Esophagus muscularis mucosa (tissue), 4 donors: ENCODE measurements at regions of chr15 and their contacts with region 1.

Region 1: GRCh38 chr15:50145451-50145872 is 26.4 kb upstream of the ATP8B4 start:
- DNase-seq: no peak
- H3K4me3 ChIP-seq: no peak overlapping the region
- H3K27ac ChIP-seq: no peak overlapping the region
- H3K4me1 ChIP-seq: peaks cover 0 to 8% (median 6%) of the 10 kb centered on the region in 4 donors
- H3K27me3 ChIP-seq: no peaks in the 10 kb centered on the region
- CTCF ChIP-seq: peak; percentile 56 to 62 (median 58)
- EP300 ChIP-seq: no peak
- POLR2A ChIP-seq: no peak

Region 2: DNA sequence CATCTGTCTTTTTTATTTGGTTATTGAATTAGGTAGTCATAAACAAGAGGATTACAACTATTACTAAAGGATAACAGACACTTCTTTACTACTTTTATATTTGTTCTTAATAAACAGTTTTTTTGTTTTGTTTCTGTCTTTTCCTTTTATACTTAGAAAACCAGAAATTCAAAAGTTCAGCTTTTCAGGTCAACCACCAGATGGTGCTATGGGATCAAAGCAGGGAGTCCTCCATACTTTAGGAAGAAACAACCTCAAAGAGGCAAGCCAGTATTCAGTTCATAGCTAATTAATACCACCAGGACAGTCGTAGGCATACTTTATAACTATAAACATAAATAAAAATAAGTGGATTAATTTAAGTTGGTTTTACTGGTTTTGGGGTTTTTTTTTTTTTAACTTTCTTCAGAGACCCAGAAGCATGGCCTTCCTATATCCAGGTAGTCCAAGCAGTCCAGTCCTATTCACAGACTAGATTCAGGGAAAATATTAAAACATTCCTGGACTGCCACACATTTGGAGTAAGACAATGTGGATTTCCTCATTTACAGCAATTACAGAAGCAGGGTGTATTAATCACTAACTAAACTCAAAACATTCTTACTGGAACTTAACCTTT is 1283.5 kb before region 1 on chr15:
- intact Hi-C with region 1: loop called (anchors 5 kb)
- DNase-seq: no peak
- H3K4me3 ChIP-seq: no peak overlapping the region
- H3K27ac ChIP-seq: no peak overlapping the region
- H3K4me1 ChIP-seq: peaks cover 0 to 20% (median 15%) of the 10 kb centered on the region in 4 donors
- H3K27me3 ChIP-seq: no peaks in the 10 kb centered on the region
- CTCF ChIP-seq: peak; percentile 86 to 89 (median 88)
- EP300 ChIP-seq: no peak
- POLR2A ChIP-seq: no peak

Region 3: GRCh38 chr15:49235446-49236124 is 909.9 kb before region 1 on chr15:
- intact Hi-C with region 1: loop called (anchors 5 kb)
- DNase-seq: no peak
- H3K4me3 ChIP-seq: no peak overlapping the region
- H3K27ac ChIP-seq: peak overlapping the region; percentile 45 to 69 (median 47)
- H3K4me1 ChIP-seq: peaks cover 17 to 57% (median 53%) of the 10 kb centered on the region in 4 donors
- H3K27me3 ChIP-seq: no peaks in the 10 kb centered on the region
- CTCF ChIP-seq: peak; percentile 75 to 91 (median 79)
- EP300 ChIP-seq: no peak
- POLR2A ChIP-seq: no peak

Region 4: GRCh38 chr15:49855917-49856637 is 289.4 kb before region 1 on chr15:
- intact Hi-C with region 1: no loop called
- DNase-seq: no peak
- H3K4me3 ChIP-seq: no peak overlapping the region
- H3K27ac ChIP-seq: peak overlapping the region; percentile 8 to 46 (median 44)
- H3K4me1 ChIP-seq: peaks cover 0 to 11% (median 0%) of the 10 kb centered on the region in 4 donors
- H3K27me3 ChIP-seq: no peaks in the 10 kb centered on the region
- CTCF ChIP-seq: no peak
- EP300 ChIP-seq: no peak
- POLR2A ChIP-seq: no peak

Region 5: GRCh38 chr15:50083424-50084025 is 61.9 kb before region 1 on chr15:
- intact Hi-C with region 1: no loop called
- DNase-seq: no peak
- H3K4me3 ChIP-seq: no peak overlapping the region
- H3K27ac ChIP-seq: no peak overlapping the region
- H3K4me1 ChIP-seq: no peaks in the 10 kb centered on the region
- H3K27me3 ChIP-seq: no peaks in the 10 kb centered on the region
- CTCF ChIP-seq: no peak
- EP300 ChIP-seq: no peak
- POLR2A ChIP-seq: no peak

Region 6: DNA sequence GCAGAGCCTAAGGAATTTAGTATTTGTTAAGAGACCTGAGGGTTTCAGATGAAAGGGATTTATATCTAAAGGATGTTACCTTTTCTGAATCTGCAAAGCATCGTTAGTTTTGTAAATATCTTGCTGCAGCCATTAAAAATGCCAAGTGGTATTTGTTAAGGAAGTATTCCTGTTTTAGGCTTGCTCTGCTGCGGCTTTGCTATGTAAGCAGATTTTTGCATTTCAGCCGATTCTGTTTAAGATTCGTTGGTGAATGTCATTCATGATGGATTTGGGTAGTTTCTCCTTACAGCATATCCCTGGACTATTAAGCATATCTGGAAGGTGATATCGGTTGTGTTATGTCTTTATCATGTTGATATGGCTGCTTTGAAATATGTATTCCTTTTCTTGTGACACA is 279.8 kb after region 1 on chr15:
- intact Hi-C with region 1: no loop called
- DNase-seq: no peak
- H3K4me3 ChIP-seq: peak overlapping the region; percentile 86 to 96 (median 90)
- H3K27ac ChIP-seq: peak overlapping the region; percentile 89 to 94 (median 94)
- H3K4me1 ChIP-seq: peaks cover 19 to 43% (median 39%) of the 10 kb centered on the region in 4 donors
- H3K27me3 ChIP-seq: no peaks in the 10 kb centered on the region
- CTCF ChIP-seq: no peak
- EP300 ChIP-seq: no peak
- POLR2A ChIP-seq: no peak

Region 7: DNA sequence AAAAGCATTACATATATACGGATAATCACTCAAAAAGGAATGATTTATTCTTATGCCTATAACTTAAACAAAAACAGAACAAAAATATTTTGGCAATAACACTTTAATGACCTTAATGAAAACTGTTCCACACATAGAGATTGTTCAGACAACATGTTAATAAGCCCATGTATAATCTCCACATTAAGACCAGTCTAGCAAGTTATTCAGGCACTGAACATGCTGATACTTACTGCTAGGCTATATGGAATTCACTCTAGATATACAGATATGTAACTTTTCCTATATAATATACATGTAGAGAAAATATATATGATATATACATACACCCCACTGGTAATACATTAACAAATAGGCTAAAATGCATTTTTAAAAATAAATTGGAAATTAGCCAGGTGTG is 444.8 kb after region 1 on chr15:
- intact Hi-C with region 1: no loop called
- DNase-seq: no peak
- H3K4me3 ChIP-seq: no peak overlapping the region
- H3K27ac ChIP-seq: no peak overlapping the region
- H3K4me1 ChIP-seq: no peaks in the 10 kb centered on the region
- H3K27me3 ChIP-seq: no peaks in the 10 kb centered on the region
- CTCF ChIP-seq: no peak
- EP300 ChIP-seq: no peak
- POLR2A ChIP-seq: no peak